H1 (cell line): ENCODE measurements at regions of chr14 and their contacts with region 1.

Region 1: GRCh38 chr14:69519204-69520100 is 34.9 kb downstream of the PLEKHD1 start:
- DNase-seq: no peak
- H3K4me3 ChIP-seq: no peak overlapping the region
- H3K27ac ChIP-seq: no peak overlapping the region
- H3K4me1 ChIP-seq: peaks cover 0 to 7% (median 3%) of the 10 kb centered on the region in 4 experiments; a peak in 4 of 7 replicates
- H3K27me3 ChIP-seq: no peaks in the 10 kb centered on the region; a peak in 1 of 7 replicates
- CTCF ChIP-seq: no peak
- EP300 ChIP-seq: no peak
- POLR2A ChIP-seq: no peak
- RAD21 ChIP-seq: no peak

Region 2: DNA sequence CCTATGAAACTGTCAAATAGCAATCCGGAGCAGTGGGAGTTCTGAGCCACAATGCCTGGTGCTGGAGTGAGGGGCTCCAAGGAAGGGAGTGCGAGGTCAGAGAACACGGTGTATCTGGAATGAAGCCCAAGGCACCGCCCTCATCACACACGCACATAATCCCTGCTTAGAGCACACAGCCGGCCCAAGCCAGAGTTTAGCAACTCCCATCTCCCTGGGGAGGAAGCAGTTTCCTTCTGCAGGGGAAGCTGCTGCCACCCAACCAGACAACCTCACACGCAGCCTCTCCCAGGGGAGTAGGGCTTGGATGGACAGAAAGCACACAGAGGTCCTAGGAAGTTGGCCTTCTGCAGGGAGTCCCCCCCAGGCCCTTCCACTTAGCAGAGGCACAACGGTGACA is 571.6 kb before region 1 on chr14:
- CTCF ChIA-PET with region 1: no interaction called
- POLR2A ChIA-PET with region 1: no interaction called
- DNase-seq: no peak
- H3K4me3 ChIP-seq: no peak overlapping the region
- H3K27ac ChIP-seq: no peak overlapping the region
- H3K4me1 ChIP-seq: peaks cover 0 to 27% (median 9%) of the 10 kb centered on the region in 4 experiments; a peak in 5 of 7 replicates
- H3K27me3 ChIP-seq: no peaks in the 10 kb centered on the region
- CTCF ChIP-seq: no peak
- EP300 ChIP-seq: no peak
- POLR2A ChIP-seq: no peak
- RAD21 ChIP-seq: no peak

Region 3: DNA sequence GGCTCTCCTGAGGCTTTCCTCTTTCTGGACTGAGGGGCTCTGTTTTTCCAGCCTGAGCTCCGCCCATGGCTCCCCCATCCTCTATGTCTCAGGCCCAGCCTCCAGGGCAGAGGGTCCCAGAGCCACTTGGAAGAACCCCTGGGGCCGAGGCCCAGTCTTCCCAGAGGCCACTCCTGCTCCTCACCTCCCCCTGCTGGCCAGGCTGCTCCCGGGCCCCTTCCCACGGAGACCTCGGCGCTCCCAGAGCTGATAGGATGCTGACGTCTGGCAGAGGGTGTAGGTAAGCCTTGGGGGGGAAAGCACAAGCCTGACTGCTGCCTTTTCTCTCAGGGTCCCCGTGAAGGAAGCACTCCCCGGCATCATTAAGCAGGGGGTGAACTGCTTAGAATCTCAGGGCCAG is 172.7 kb before region 1 on chr14:
- CTCF ChIA-PET with region 1: no interaction called
- POLR2A ChIA-PET with region 1: no interaction called
- DNase-seq: peak; percentile 33 to 95
- H3K4me3 ChIP-seq: peak overlapping the region in 2 of 4 experiments; percentile 7 to 14; a peak in 1 of 8 replicates
- H3K27ac ChIP-seq: no peak overlapping the region
- H3K4me1 ChIP-seq: peaks cover 0 to 6% (median 2%) of the 10 kb centered on the region in 4 experiments; a peak in 5 of 7 replicates
- H3K27me3 ChIP-seq: no peaks in the 10 kb centered on the region
- CTCF ChIP-seq: peak; percentile 92 to 93 (median 92)
- EP300 ChIP-seq: no peak
- POLR2A ChIP-seq: no peak
- RAD21 ChIP-seq: peak; percentile 73 to 82

Region 4: DNA sequence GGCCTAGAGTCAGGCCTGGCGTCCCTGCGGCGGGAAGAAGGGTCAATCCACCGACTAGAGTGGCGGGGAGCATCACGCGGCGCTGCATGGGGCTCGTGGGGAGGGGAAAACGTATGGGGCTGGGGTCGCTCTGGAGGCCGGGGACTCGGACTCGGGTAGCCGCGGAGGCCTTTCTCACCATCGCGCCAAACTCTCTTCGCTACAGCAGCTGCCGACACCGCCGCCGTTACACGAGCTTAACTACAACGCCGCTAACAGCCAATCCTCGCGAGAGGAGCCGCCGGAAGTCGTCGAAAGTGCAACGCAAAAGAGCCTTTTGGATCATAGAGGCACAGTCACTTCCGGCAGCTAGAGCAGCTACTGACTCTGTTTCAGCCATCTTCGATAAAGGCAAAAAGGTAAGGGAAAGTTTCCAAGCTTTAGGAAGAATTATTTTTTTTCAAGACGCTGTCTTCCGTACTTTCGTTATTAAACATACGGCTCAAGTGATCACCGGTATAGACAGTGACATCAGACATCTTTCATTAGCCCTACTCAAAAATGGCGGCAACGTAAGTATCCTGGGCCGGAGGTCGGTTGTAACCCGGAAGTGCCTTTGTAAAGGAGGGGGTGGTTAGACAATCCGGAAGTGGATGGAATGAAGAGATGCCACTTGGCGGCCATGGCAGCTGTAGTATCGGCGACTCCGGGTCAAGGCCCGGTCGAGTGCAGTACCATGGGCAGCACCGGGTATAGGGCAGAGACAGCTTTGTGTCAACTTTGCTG is 121.2 kb before region 1 on chr14 and contains the starts of genes ERH and SLC39A9:
- CTCF ChIA-PET with region 1: no interaction called
- POLR2A ChIA-PET with region 1: no interaction called
- DNase-seq: peak; percentile 85 to 89
- H3K4me3 ChIP-seq: peak within 1 kb of the TSS; percentile 83 to 98 (median 92)
- H3K27ac ChIP-seq: peak within 1 kb of the TSS; percentile 93
- H3K4me1 ChIP-seq: peaks cover 0 to 2% (median under 1%) of the 10 kb centered on the region in 4 experiments; a peak in 2 of 7 replicates
- H3K27me3 ChIP-seq: no peaks in the 10 kb centered on the region
- CTCF ChIP-seq: no peak
- EP300 ChIP-seq: 0 out of 3 replicates have a peak, but pooled peaks of 1 of the 2 experiments have one; percentile 4
- POLR2A ChIP-seq: peak; percentile 81 to 98
- RAD21 ChIP-seq: no peak
- total RNA-seq, gene ERH: 447 and 454 TPM in 2 replicates
- total RNA-seq, gene SLC39A9: 43.8 and 44.2 TPM in 2 replicates

Region 5: DNA sequence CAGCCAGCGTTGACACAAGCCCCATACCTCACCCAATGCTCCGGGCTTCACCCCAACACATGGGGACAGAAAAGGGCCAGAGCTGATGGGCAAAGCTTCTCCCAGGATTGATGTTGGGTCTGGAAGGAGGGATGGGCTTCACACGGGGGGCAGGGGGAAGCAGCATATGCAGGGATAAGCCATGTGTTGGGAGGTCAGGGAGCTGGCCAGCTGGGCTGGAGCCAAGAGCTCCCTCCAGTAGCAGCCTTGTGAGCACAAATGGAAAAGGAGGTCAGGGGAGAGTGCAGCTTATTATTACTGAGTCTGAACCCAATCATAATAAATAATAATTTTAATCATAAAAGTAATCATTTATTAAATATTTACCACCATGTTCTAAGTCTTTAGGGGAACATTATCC is 25.7 kb before region 1 on chr14:
- CTCF ChIA-PET with region 1: interaction called, 21 read pairs
- POLR2A ChIA-PET with region 1: no interaction called
- DNase-seq: no peak
- H3K4me3 ChIP-seq: no peak overlapping the region
- H3K27ac ChIP-seq: no peak overlapping the region
- H3K4me1 ChIP-seq: no peaks in the 10 kb centered on the region
- H3K27me3 ChIP-seq: no peaks in the 10 kb centered on the region
- CTCF ChIP-seq: no peak
- EP300 ChIP-seq: no peak
- POLR2A ChIP-seq: no peak
- RAD21 ChIP-seq: no peak

Region 6: DNA sequence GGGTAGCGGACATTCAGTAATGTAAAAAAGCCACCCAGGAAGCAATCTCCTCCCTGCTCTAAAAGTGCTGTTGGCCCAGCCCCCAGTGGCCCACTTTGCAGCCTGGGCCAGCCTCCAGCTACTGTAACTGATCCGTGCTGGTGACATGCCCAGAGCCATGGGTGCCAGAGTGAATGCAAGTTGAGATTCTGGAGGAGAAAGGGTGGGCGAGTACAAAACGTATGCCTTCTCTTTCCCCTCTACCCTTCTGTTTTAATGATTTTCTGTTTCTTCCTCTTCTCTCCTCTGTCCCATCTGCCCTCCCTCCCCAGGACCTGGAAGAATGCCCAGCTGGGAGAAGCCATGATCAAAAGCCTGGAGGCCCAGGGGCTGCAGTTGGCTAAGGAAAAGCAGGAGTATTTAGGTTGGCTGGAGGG is 18.0 kb before region 1 on chr14:
- CTCF ChIA-PET with region 1: interaction called, 33 read pairs
- POLR2A ChIA-PET with region 1: no interaction called
- DNase-seq: no peak
- H3K4me3 ChIP-seq: no peak overlapping the region
- H3K27ac ChIP-seq: no peak overlapping the region
- H3K4me1 ChIP-seq: peaks cover 0 to 5% (median 1%) of the 10 kb centered on the region in 4 experiments; a peak in 2 of 7 replicates
- H3K27me3 ChIP-seq: no peaks in the 10 kb centered on the region; a peak in 1 of 7 replicates
- CTCF ChIP-seq: no peak
- EP300 ChIP-seq: no peak
- POLR2A ChIP-seq: no peak
- RAD21 ChIP-seq: no peak

Region 7: GRCh38 chr14:69529563-69529962 is 10.1 kb after region 1 on chr14:
- CTCF ChIA-PET with region 1: interaction called, 11 read pairs
- POLR2A ChIA-PET with region 1: interaction called, 3 read pairs
- DNase-seq: no peak
- H3K4me3 ChIP-seq: no peak overlapping the region
- H3K27ac ChIP-seq: no peak overlapping the region
- H3K4me1 ChIP-seq: no peaks in the 10 kb centered on the region
- H3K27me3 ChIP-seq: no peaks in the 10 kb centered on the region
- CTCF ChIP-seq: no peak
- EP300 ChIP-seq: no peak
- POLR2A ChIP-seq: no peak
- RAD21 ChIP-seq: no peak

Region 8: GRCh38 chr14:69543341-69544249 is 24.1 kb after region 1 on chr14:
- CTCF ChIA-PET with region 1: interaction called, 25 read pairs
- POLR2A ChIA-PET with region 1: no interaction called
- DNase-seq: no peak
- H3K4me3 ChIP-seq: no peak overlapping the region
- H3K27ac ChIP-seq: no peak overlapping the region
- H3K4me1 ChIP-seq: peaks cover 0 to 6% (median under 1%) of the 10 kb centered on the region in 4 experiments; a peak in 4 of 7 replicates
- H3K27me3 ChIP-seq: no peaks in the 10 kb centered on the region; a peak in 3 of 7 replicates
- CTCF ChIP-seq: no peak
- EP300 ChIP-seq: no peak
- POLR2A ChIP-seq: no peak
- RAD21 ChIP-seq: no peak